ENCODE measurements at regions of chr14 and their contacts with region 1.

Region 1: DNA sequence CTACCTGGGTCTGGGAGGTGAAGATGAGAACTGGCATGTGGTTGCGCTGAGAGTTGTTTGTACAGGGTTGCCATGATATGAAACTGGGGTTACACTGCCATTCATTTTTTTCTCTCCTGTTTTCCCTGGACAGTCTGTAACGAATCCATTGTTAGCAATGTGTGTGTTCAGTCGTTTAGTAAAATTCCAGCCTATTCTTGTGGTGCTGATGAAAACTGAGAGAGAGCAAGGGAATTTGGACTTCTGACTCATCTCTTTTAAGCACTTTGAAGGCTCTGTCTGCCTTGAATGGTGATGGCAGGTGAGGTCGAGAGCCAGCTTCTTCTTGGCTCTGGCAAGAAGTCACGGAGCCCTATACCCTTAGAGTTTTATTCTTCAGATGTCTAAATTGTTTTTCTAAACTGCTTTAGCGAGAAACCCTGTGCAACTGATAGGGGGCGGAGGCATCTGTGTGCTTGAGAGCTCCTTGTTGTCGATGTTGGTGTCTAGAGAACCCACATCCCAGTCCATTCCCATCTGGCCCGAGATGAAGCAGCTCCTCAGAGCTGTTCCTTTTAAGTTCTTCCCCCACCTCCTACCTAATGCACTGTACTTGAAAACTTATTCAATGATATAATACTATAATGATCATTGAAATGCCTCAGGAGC is 204.4 kb downstream of the TMX1 start:
- DNase-seq: no peak
- ATAC-seq: no peak
- H3K4me3 Mint-ChIP-seq: no peak overlapping the region
- H3K27ac Mint-ChIP-seq: no peak overlapping the region
- H3K4me1 Mint-ChIP-seq: no peaks in the 10 kb centered on the region
- H3K27me3 Mint-ChIP-seq: peaks cover 17% of the 10 kb centered on the region

Region 2: DNA sequence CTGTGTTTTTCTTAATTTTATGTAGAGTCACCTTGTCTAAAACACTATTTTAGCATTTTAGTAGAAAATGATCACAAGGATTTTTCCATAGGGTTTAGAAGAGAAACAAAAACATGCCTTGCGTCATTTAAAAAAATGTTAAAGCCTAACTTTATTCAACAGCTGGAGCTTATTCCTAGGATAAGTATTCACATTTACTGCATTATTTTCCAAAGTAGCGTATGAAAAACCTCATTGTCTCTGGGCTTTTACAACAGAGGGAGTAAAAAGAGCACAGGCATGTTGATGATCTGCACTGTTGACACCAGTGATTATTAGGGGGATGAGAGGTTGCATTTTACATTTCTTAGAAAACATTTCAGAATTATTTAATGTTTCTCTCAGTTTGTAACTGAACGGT is 273.3 kb after region 1 on chr14:
- CTCF ChIA-PET with region 1: no interaction called
- POLR2A ChIA-PET with region 1: interaction called, 11 read pairs
- intact Hi-C with region 1: no loop called
- DNase-seq: no peak
- ATAC-seq: no peak
- H3K4me3 Mint-ChIP-seq: no peak overlapping the region
- H3K27ac Mint-ChIP-seq: no peak overlapping the region
- H3K4me1 Mint-ChIP-seq: no peaks in the 10 kb centered on the region
- H3K27me3 Mint-ChIP-seq: no peaks in the 10 kb centered on the region